ENCODE measurements at regions of chr19 and their contacts with region 1.

Region 1: GRCh38 chr19:52535771-52536447 is 8.4 kb downstream of the ZNF808 start:
- DNase-seq: peak; percentile 76 to 94 (median 92)
- ATAC-seq: peak; percentile 98
- H3K4me3 ChIP-seq: peak overlapping the region; percentile 65 to 90
- H3K4me3 Mint-ChIP-seq: peak overlapping the region; percentile 96
- H3K27ac ChIP-seq: peak overlapping the region; percentile 62 to 85
- H3K27ac Mint-ChIP-seq: peak overlapping the region; percentile 95
- H3K4me1 ChIP-seq: peaks cover 10% of the 10 kb centered on the region
- H3K4me1 Mint-ChIP-seq: peaks cover 48% of the 10 kb centered on the region
- H3K27me3 ChIP-seq: no peaks in the 10 kb centered on the region
- H3K27me3 Mint-ChIP-seq: no peaks in the 10 kb centered on the region
- CTCF ChIP-seq: peak; percentile 19

Region 2: DNA sequence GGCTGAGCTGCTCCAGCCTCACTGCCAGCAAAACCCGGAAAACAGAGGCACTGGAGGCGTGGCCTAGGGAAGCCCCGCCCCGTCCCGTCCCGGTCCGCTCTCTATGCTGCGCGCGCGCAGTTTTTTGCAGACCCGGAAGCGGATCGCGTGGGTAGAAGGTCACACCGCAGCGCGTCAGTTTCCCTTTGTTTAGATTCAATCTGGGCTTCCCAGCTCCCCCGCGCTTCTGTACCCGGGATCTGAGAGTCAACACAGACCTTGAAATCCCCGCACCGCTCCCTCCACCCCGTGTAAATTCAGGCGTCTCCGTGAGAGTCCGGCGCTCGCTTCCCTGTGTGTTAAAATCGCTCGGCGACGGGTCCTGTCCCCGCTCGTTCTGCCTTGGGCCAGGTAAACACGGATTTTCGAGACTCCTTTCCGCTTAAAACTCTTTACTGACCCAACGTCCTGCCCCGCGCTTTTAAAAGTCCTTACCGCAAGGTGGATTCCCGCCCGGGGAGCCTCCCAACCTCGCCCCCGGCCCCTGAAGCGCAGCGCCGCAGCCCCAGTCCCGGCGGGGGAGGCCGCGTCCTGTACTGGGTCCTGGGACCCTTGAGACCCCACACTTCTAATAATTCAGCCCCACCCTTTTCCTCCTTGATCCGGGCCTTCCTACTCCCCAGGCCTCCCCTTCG is 199.7 kb before region 1 on chr19 and contains the start of gene ZNF610:
- CTCF ChIA-PET with region 1: no interaction called
- POLR2A ChIA-PET with region 1: no interaction called
- intact Hi-C with region 1: loop called in 1 of 2 experiments (anchors 1 kb)
- DNase-seq: peak; percentile 71 to 91 (median 84)
- ATAC-seq: peak; percentile 96
- H3K4me3 ChIP-seq: peak within 1 kb of the TSS; percentile 70 to 87
- H3K4me3 Mint-ChIP-seq: peak within 1 kb of the TSS; percentile 98
- H3K27ac ChIP-seq: peak within 1 kb of the TSS; percentile 80 to 85
- H3K27ac Mint-ChIP-seq: peak within 1 kb of the TSS; percentile 99
- H3K4me1 ChIP-seq: peaks cover 6% of the 10 kb centered on the region
- H3K4me1 Mint-ChIP-seq: peaks cover 14% of the 10 kb centered on the region
- H3K27me3 ChIP-seq: no peaks in the 10 kb centered on the region
- H3K27me3 Mint-ChIP-seq: no peaks in the 10 kb centered on the region
- CTCF ChIP-seq: no peak
- total RNA-seq, gene ZNF610: 0.33 TPM

Region 3: GRCh38 chr19:52570000-52570861 is 34.3 kb after region 1 on chr19 and contains the start of gene ZNF701:
- CTCF ChIA-PET with region 1: no interaction called
- POLR2A ChIA-PET with region 1: no interaction called
- intact Hi-C with region 1: loop called (anchors 1 kb)
- DNase-seq: peak; percentile 93 to 97 (median 95)
- ATAC-seq: peak; percentile 98
- H3K4me3 ChIP-seq: peak within 1 kb of the TSS; percentile 81 to 96
- H3K4me3 Mint-ChIP-seq: peak within 1 kb of the TSS; percentile 90
- H3K27ac ChIP-seq: peak within 1 kb of the TSS; percentile 77 to 91
- H3K27ac Mint-ChIP-seq: peak within 1 kb of the TSS; percentile 93
- H3K4me1 ChIP-seq: peaks cover 12% of the 10 kb centered on the region
- H3K4me1 Mint-ChIP-seq: peaks cover 42% of the 10 kb centered on the region
- H3K27me3 ChIP-seq: no peaks in the 10 kb centered on the region
- H3K27me3 Mint-ChIP-seq: no peaks in the 10 kb centered on the region
- CTCF ChIP-seq: peak; percentile 30
- total RNA-seq, gene ZNF701: 11.2 to 11.9 TPM

Region 4: GRCh38 chr19:52601025-52601973 is 65.4 kb after region 1 on chr19:
- CTCF ChIA-PET with region 1: no interaction called
- POLR2A ChIA-PET with region 1: no interaction called
- intact Hi-C with region 1: loop called (anchors 2 kb)
- DNase-seq: peak; percentile 86 to 96 (median 93)
- ATAC-seq: peak; percentile 99
- H3K4me3 ChIP-seq: peak overlapping the region; percentile 96 to 98
- H3K4me3 Mint-ChIP-seq: peak overlapping the region; percentile 97
- H3K27ac ChIP-seq: peak overlapping the region; percentile 71
- H3K27ac Mint-ChIP-seq: peak overlapping the region; percentile 90
- H3K4me1 ChIP-seq: peaks cover 13% of the 10 kb centered on the region
- H3K4me1 Mint-ChIP-seq: peaks cover 44% of the 10 kb centered on the region
- H3K27me3 ChIP-seq: no peaks in the 10 kb centered on the region
- H3K27me3 Mint-ChIP-seq: no peaks in the 10 kb centered on the region
- CTCF ChIP-seq: peak; percentile 49

Region 5: GRCh38 chr19:52690369-52691214 is 154.7 kb after region 1 on chr19:
- CTCF ChIA-PET with region 1: no interaction called
- POLR2A ChIA-PET with region 1: no interaction called
- intact Hi-C with region 1: loop called in 1 of 2 experiments (anchors 2 kb)
- DNase-seq: peak; percentile 75 to 94 (median 93)
- ATAC-seq: peak; percentile 97
- H3K4me3 ChIP-seq: peak overlapping the region; percentile 84 to 94
- H3K4me3 Mint-ChIP-seq: peak overlapping the region; percentile 92
- H3K27ac ChIP-seq: peak overlapping the region; percentile 58 to 87
- H3K27ac Mint-ChIP-seq: peak overlapping the region; percentile 95
- H3K4me1 ChIP-seq: peaks cover 16% of the 10 kb centered on the region
- H3K4me1 Mint-ChIP-seq: peaks cover 31% of the 10 kb centered on the region
- H3K27me3 ChIP-seq: no peaks in the 10 kb centered on the region
- H3K27me3 Mint-ChIP-seq: no peaks in the 10 kb centered on the region
- CTCF ChIP-seq: no peak